ENCODE measurements at regions of chr18 and their contacts with region 1.

Region 1: GRCh38 chr18:2932247-2933181 is 80.4 kb downstream of the LPIN2 start:
- DNase-seq: peak; percentile 41 to 75 (median 52)
- H3K4me3 ChIP-seq: no peak overlapping the region
- H3K4me3 Mint-ChIP-seq: no peak overlapping the region
- H3K27ac ChIP-seq: peak overlapping the region in 1 of 2 donors; percentile 45
- H3K27ac Mint-ChIP-seq: peak overlapping the region in 4 of 7 donors; percentile 12 to 58 (median 40)
- H3K4me1 ChIP-seq: no peaks in the 10 kb centered on the region
- H3K4me1 Mint-ChIP-seq: no peaks in the 10 kb centered on the region
- H3K27me3 ChIP-seq: no peaks in the 10 kb centered on the region
- H3K27me3 Mint-ChIP-seq: no peaks in the 10 kb centered on the region
- CTCF ChIP-seq: peak; percentile 85

Region 2: GRCh38 chr18:2513616-2514015 is 418.9 kb before region 1 on chr18:
- intact Hi-C with region 1: no loop called
- DNase-seq: no peak
- H3K4me3 ChIP-seq: no peak overlapping the region
- H3K4me3 Mint-ChIP-seq: no peak overlapping the region
- H3K27ac ChIP-seq: no peak overlapping the region
- H3K27ac Mint-ChIP-seq: no peak overlapping the region
- H3K4me1 ChIP-seq: peaks cover 8% of the 10 kb centered on the region in 2 donors
- H3K4me1 Mint-ChIP-seq: peaks cover 18% of the 10 kb centered on the region
- H3K27me3 ChIP-seq: no peaks in the 10 kb centered on the region
- H3K27me3 Mint-ChIP-seq: peaks cover 0 to 5% (median 2%) of the 10 kb centered on the region in 3 donors
- CTCF ChIP-seq: no peak

Region 3: GRCh38 chr18:2627821-2628276 is 304.7 kb before region 1 on chr18:
- intact Hi-C with region 1: no loop called
- DNase-seq: peak; percentile 69 to 88 (median 87)
- H3K4me3 ChIP-seq: no peak overlapping the region
- H3K4me3 Mint-ChIP-seq: no peak overlapping the region
- H3K27ac ChIP-seq: peak overlapping the region in 1 of 2 donors; percentile 26
- H3K27ac Mint-ChIP-seq: peak overlapping the region in 2 of 7 donors; percentile 10 to 15
- H3K4me1 ChIP-seq: peaks cover 0 to 5% of the 10 kb centered on the region in 2 donors
- H3K4me1 Mint-ChIP-seq: peaks cover 6% of the 10 kb centered on the region
- H3K27me3 ChIP-seq: no peaks in the 10 kb centered on the region
- H3K27me3 Mint-ChIP-seq: peaks cover 0 to 2% (median 0%) of the 10 kb centered on the region in 3 donors
- CTCF ChIP-seq: no peak

Region 4: GRCh38 chr18:2971741-2972552 is 39.4 kb after region 1 on chr18:
- intact Hi-C with region 1: no loop called
- DNase-seq: peak; percentile 85 to 88 (median 87)
- H3K4me3 ChIP-seq: peak overlapping the region; percentile 24 to 67 (median 63)
- H3K4me3 Mint-ChIP-seq: peak overlapping the region; percentile 77 to 80
- H3K27ac ChIP-seq: peak overlapping the region; percentile 96 to 97
- H3K27ac Mint-ChIP-seq: peak overlapping the region; percentile 94 to 98 (median 95)
- H3K4me1 ChIP-seq: peaks cover 59 to 67% of the 10 kb centered on the region in 2 donors
- H3K4me1 Mint-ChIP-seq: peaks cover 67% of the 10 kb centered on the region
- H3K27me3 ChIP-seq: no peaks in the 10 kb centered on the region
- H3K27me3 Mint-ChIP-seq: peaks cover 0 to 5% (median 0%) of the 10 kb centered on the region in 3 donors
- CTCF ChIP-seq: no peak

Region 5: GRCh38 chr18:2985628-2986027 is 53.1 kb after region 1 on chr18:
- intact Hi-C with region 1: loop called (anchors 5 kb)
- DNase-seq: peak in 2 of 3 donors; percentile 38 to 55
- H3K4me3 ChIP-seq: no peak overlapping the region
- H3K4me3 Mint-ChIP-seq: no peak overlapping the region
- H3K27ac ChIP-seq: no peak overlapping the region
- H3K27ac Mint-ChIP-seq: no peak overlapping the region
- H3K4me1 ChIP-seq: peaks cover 35 to 59% of the 10 kb centered on the region in 2 donors
- H3K4me1 Mint-ChIP-seq: peaks cover 54% of the 10 kb centered on the region
- H3K27me3 ChIP-seq: no peaks in the 10 kb centered on the region
- H3K27me3 Mint-ChIP-seq: peaks cover 0 to 1% (median 0%) of the 10 kb centered on the region in 3 donors
- CTCF ChIP-seq: peak; percentile 83

Region 6: DNA sequence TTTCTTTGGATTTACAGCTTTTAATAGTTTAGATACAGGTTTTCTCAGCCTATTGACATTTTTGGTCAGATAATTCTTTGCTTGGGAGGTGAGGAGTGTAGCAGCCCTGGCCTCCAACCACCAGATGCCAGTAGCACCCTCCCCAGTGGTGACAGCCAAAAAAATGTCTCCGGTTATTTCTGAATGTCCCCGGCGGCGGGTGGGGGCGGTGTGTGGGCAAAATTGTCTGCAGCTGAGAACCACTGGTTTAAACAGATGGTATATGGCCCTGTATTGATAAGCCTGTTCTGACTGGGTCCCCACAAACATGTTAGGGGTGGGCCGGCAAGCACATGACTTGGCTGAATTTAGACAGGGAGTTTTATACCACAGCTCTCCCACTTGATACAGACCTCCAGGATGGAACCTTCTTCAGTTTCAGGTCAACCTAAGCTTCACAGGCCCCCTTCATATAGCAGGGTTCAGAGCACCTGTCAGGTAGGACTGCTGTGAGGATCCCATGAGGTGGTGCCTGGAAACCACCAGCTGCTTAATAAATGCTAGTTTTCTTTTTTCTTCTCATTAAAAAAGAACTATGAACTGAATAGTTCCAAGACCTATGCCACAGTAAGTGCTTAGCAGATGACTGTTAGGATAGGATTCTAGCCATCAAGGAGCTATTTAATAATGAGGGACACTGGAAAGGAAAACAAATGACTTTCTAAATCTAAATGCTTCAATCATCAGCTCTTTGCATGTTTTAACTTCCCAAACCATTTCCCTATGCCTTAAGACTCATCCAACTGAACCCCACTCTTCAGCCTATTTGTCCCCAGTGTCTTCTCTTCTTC is 62.3 kb after region 1 on chr18:
- intact Hi-C with region 1: loop called in 1 of 2 experiments (anchors 5 kb)
- DNase-seq: peak; percentile 50 to 61 (median 57)
- H3K4me3 ChIP-seq: no peak overlapping the region
- H3K4me3 Mint-ChIP-seq: peak overlapping the region in 1 of 2 donors; percentile 71
- H3K27ac ChIP-seq: no peak overlapping the region
- H3K27ac Mint-ChIP-seq: peak overlapping the region in 4 of 7 donors; percentile 0 to 61 (median 47)
- H3K4me1 ChIP-seq: peaks cover 18 to 28% of the 10 kb centered on the region in 2 donors
- H3K4me1 Mint-ChIP-seq: peaks cover 45% of the 10 kb centered on the region
- H3K27me3 ChIP-seq: no peaks in the 10 kb centered on the region
- H3K27me3 Mint-ChIP-seq: no peaks in the 10 kb centered on the region
- CTCF ChIP-seq: peak; percentile 77

Region 7: GRCh38 chr18:3062798-3063680 is 130.5 kb after region 1 on chr18:
- intact Hi-C with region 1: loop called (anchors 10 kb)
- DNase-seq: peak; percentile 22 to 57 (median 45)
- H3K4me3 ChIP-seq: no peak overlapping the region
- H3K4me3 Mint-ChIP-seq: peak overlapping the region in 1 of 2 donors; percentile 70
- H3K27ac ChIP-seq: no peak overlapping the region
- H3K27ac Mint-ChIP-seq: no peak overlapping the region
- H3K4me1 ChIP-seq: no peaks in the 10 kb centered on the region
- H3K4me1 Mint-ChIP-seq: peaks cover 40% of the 10 kb centered on the region
- H3K27me3 ChIP-seq: no peaks in the 10 kb centered on the region
- H3K27me3 Mint-ChIP-seq: no peaks in the 10 kb centered on the region
- CTCF ChIP-seq: peak; percentile 78

Region 8: GRCh38 chr18:3135536-3135935 is 203.0 kb after region 1 on chr18:
- intact Hi-C with region 1: loop called (anchors 5 to 10 kb)
- DNase-seq: no peak
- H3K4me3 ChIP-seq: no peak overlapping the region
- H3K4me3 Mint-ChIP-seq: no peak overlapping the region
- H3K27ac ChIP-seq: no peak overlapping the region
- H3K27ac Mint-ChIP-seq: no peak overlapping the region
- H3K4me1 ChIP-seq: no peaks in the 10 kb centered on the region
- H3K4me1 Mint-ChIP-seq: no peaks in the 10 kb centered on the region
- H3K27me3 ChIP-seq: no peaks in the 10 kb centered on the region
- H3K27me3 Mint-ChIP-seq: peaks cover 0 to 2% (median 0%) of the 10 kb centered on the region in 3 donors
- CTCF ChIP-seq: no peak

Region 9: GRCh38 chr18:3151399-3152264 is 219.1 kb after region 1 on chr18:
- intact Hi-C with region 1: loop called in 1 of 2 experiments (anchors 5 kb)
- DNase-seq: peak; percentile 28 to 62 (median 46)
- H3K4me3 ChIP-seq: no peak overlapping the region
- H3K4me3 Mint-ChIP-seq: no peak overlapping the region
- H3K27ac ChIP-seq: no peak overlapping the region
- H3K27ac Mint-ChIP-seq: no peak overlapping the region
- H3K4me1 ChIP-seq: no peaks in the 10 kb centered on the region
- H3K4me1 Mint-ChIP-seq: peaks cover 3% of the 10 kb centered on the region
- H3K27me3 ChIP-seq: no peaks in the 10 kb centered on the region
- H3K27me3 Mint-ChIP-seq: peaks cover 0 to 4% (median 0%) of the 10 kb centered on the region in 3 donors
- CTCF ChIP-seq: peak; percentile 88

Region 10: GRCh38 chr18:3245853-3246634 is 313.5 kb after region 1 on chr18:
- intact Hi-C with region 1: loop called (anchors 2 to 5 kb)
- DNase-seq: peak; percentile 81 to 89 (median 86)
- H3K4me3 ChIP-seq: peak overlapping the region; percentile 64 to 96 (median 93)
- H3K4me3 Mint-ChIP-seq: peak overlapping the region; percentile 89 to 93
- H3K27ac ChIP-seq: peak overlapping the region; percentile 95 to 96
- H3K27ac Mint-ChIP-seq: peak overlapping the region; percentile 90 to 98 (median 97)
- H3K4me1 ChIP-seq: peaks cover 37 to 48% of the 10 kb centered on the region in 2 donors
- H3K4me1 Mint-ChIP-seq: peaks cover 43% of the 10 kb centered on the region
- H3K27me3 ChIP-seq: no peaks in the 10 kb centered on the region
- H3K27me3 Mint-ChIP-seq: no peaks in the 10 kb centered on the region
- CTCF ChIP-seq: peak; percentile 94

Measured in CD14-positive monocyte (primary cell).